Psoas muscle (tissue), 8 donors: ENCODE measurements at regions of chr1 and their contacts with region 1.

Region 1: GRCh38 chr1:91569411-91570119 is 68.9 kb downstream of the CDC7 start:
- DNase-seq: peak; percentile 87 to 90
- ATAC-seq: peak; percentile 98 to 99 (median 98)
- H3K4me3 ChIP-seq: no peak overlapping the region
- H3K27ac ChIP-seq: peak overlapping the region; percentile 79
- H3K4me1 ChIP-seq: peaks cover 3% of the 10 kb centered on the region
- H3K27me3 ChIP-seq: no peaks in the 10 kb centered on the region
- CTCF ChIP-seq: no peak

Region 2: GRCh38 chr1:90154711-90155110 is 1414.9 kb before region 1 on chr1:
- intact Hi-C with region 1: loop called in 1 of 2 experiments (anchors 5 kb)
- DNase-seq: no peak
- ATAC-seq: no peak
- H3K4me3 ChIP-seq: no peak overlapping the region
- H3K27ac ChIP-seq: no peak overlapping the region
- H3K4me1 ChIP-seq: no peaks in the 10 kb centered on the region
- H3K27me3 ChIP-seq: no peaks in the 10 kb centered on the region
- CTCF ChIP-seq: no peak

Region 3: DNA sequence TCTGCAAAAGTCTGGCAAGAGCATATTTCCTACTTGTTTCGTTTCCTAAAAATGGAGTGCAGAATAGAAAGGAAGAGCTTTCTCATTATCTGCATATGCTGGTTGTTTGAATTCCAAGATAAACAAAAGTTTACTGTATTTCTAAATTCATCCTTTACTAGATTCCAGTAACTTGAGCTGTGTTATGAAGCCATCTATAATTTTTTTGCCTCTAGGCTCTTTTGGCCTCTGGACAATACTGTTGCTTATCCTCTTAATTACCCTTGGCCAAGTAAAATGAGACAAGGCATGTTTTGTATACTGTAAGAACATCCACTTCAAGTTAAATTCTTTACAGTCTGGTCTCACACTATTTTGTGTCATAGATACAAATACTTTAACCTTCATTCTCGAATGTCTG is 119.3 kb before region 1 on chr1:
- intact Hi-C with region 1: no loop called
- DNase-seq: no peak
- ATAC-seq: no peak
- H3K4me3 ChIP-seq: no peak overlapping the region
- H3K27ac ChIP-seq: no peak overlapping the region
- H3K4me1 ChIP-seq: no peaks in the 10 kb centered on the region
- H3K27me3 ChIP-seq: no peaks in the 10 kb centered on the region
- CTCF ChIP-seq: no peak

Region 4: DNA sequence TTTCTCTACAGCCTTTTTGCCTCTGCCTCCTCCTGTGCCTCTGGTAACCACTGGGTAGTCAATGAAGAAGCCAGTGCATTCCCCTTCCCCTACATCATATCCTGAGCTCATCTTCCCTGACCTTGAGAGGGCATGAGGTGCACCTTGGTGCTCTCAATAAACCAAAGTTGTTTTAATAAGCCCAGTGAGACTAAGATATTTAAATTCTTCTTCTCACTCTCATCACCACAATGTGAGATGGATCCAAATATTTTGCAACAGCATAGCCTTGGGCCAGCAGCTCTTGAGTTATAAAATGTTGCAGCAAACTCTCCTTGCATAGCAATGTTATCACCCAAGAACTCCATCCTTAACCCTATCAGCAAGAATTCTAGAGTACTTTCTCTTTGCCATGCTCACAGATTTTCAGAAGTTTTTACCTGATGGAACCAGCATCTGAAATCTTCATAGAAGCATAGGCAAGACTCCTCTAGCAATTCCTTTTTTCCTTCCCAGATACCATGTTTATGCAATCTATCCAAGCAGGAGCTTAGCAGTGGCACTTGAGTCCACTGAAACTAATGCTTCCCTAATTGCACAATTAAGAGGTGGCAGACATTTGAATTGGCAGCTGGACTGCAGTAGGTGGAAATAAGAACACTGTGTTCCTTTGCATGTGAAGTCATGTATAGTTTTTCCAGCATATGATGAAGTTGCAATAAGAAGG is 32.1 kb before region 1 on chr1:
- intact Hi-C with region 1: no loop called
- DNase-seq: no peak
- ATAC-seq: peak in 3 of 4 donors; percentile 3 to 50 (median 48)
- H3K4me3 ChIP-seq: no peak overlapping the region
- H3K27ac ChIP-seq: no peak overlapping the region
- H3K4me1 ChIP-seq: no peaks in the 10 kb centered on the region
- H3K27me3 ChIP-seq: no peaks in the 10 kb centered on the region
- CTCF ChIP-seq: no peak

Region 5: GRCh38 chr1:91712981-91713841 is 143.6 kb after region 1 on chr1:
- intact Hi-C with region 1: no loop called
- DNase-seq: peak; percentile 43 to 77
- ATAC-seq: peak; percentile 72 to 88 (median 77)
- H3K4me3 ChIP-seq: peak overlapping the region; percentile 32
- H3K27ac ChIP-seq: peak overlapping the region; percentile 72
- H3K4me1 ChIP-seq: peaks cover 17% of the 10 kb centered on the region
- H3K27me3 ChIP-seq: no peaks in the 10 kb centered on the region
- CTCF ChIP-seq: no peak